Upper lobe of right lung (tissue), 1 donor: ENCODE measurements at regions of chr10 and their contacts with region 1.

Region 1: GRCh38 chr10:31864834-31865518 is 63.7 kb downstream of the ARHGAP12 start:
- DNase-seq: no peak
- ATAC-seq: no peak
- H3K4me3 ChIP-seq: no peak overlapping the region
- H3K27ac ChIP-seq: no peak overlapping the region
- H3K4me1 ChIP-seq: peaks cover 15% of the 10 kb centered on the region
- H3K27me3 ChIP-seq: no peaks in the 10 kb centered on the region
- CTCF ChIP-seq: no peak

Region 2: DNA sequence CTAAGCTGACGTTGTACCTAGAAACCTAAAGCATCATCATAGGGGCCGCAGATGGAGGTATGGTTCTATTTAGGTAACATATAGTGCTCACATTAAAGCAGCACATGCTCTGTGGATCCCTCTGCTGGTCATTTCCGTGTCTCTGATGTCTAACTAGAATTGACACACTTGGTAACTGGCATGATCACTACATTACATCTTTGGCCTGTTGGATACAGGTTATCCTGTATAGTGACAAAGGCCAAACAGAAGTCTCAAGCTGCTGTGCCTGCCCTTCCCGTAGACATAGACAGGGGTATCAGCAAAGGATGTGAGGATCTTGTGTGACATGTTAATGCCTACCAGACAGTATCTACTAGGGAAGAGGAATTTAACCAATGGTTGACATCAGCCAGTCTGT is 140.1 kb after region 1 on chr10:
- intact Hi-C with region 1: loop called (anchors 10 kb)
- DNase-seq: no peak
- ATAC-seq: peak; percentile 71
- H3K4me3 ChIP-seq: no peak overlapping the region
- H3K27ac ChIP-seq: no peak overlapping the region
- H3K4me1 ChIP-seq: no peaks in the 10 kb centered on the region
- H3K27me3 ChIP-seq: no peaks in the 10 kb centered on the region
- CTCF ChIP-seq: peak; percentile 50